Thyroid gland (tissue), 4 donors: ENCODE measurements at regions of chr3 and their contacts with region 1.

Region 1: GRCh38 chr3:40464339-40465110 is 7.4 kb downstream of the RPL14 start:
- DNase-seq: no peak
- H3K4me3 ChIP-seq: no peak overlapping the region
- H3K27ac ChIP-seq: no peak overlapping the region
- H3K4me1 ChIP-seq: no peaks in the 10 kb centered on the region
- H3K27me3 ChIP-seq: no peaks in the 10 kb centered on the region
- CTCF ChIP-seq: no peak
- POLR2A ChIP-seq: no peak

Region 2: GRCh38 chr3:40524568-40525285 is 60.2 kb after region 1 on chr3 and contains the start of gene ZNF621:
- intact Hi-C with region 1: loop called (anchors 10 kb)
- DNase-seq: peak; percentile 90 to 93
- H3K4me3 ChIP-seq: peak within 1 kb of the TSS; percentile 78 to 99 (median 90)
- H3K27ac ChIP-seq: peak within 1 kb of the TSS; percentile 75 to 90 (median 85)
- H3K4me1 ChIP-seq: peaks cover 0 to 19% of the 10 kb centered on the region in 2 donors
- H3K27me3 ChIP-seq: no peaks in the 10 kb centered on the region
- CTCF ChIP-seq: peak in 2 of 6 experiments; percentile 11 to 12
- POLR2A ChIP-seq: peak in 1 of 2 donors; percentile 94
- total RNA-seq, gene ZNF621: 15.8 to 28.1 (median 23.4) TPM

Region 3: DNA sequence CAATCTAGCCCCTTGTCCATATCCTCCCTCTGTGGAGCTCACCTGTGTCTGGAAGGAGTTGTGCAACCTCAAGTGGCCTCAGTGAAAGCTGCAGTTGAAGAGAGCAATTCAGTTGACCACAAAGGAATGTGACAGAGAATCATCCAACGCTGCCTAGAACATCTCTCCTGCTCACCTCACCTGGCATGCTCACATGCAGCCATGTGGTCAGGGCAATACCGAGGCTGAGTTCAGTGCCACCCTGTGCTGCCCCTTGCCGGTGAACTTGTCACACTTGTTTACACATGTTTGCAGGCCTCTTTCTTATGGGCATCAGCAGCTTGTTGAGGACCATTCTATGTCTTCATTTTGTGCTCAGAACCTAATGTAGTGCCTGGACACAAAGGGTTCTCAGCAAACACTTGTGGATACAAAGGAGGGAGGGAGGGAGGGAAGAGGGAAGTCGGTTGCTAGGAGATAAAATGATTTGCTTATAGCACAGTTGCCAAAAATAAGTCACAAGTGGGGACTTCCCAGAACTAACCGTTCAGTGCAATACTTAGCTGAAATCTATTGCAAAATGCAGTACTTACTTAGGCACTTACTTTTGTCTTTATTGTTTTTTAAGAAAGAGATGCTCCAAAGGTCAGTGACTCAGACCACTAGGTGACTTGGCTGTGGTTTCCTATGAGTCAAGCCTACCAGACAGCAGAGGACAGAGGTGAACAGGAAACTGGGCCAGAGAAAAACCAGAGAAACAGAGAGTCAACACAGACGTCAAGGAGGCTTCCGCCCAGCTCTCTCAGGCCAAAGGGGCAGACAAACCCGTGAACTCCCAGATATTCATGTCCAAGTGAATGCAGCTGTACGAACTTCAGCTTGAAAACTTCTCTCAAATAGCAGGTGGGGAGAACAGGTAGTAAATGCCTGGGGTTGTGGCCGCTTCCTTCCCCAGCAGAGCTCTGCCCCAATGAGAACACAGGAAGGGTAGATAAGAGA is 507.0 kb after region 1 on chr3:
- intact Hi-C with region 1: loop called (anchors 10 kb)
- DNase-seq: peak; percentile 76 to 84
- H3K4me3 ChIP-seq: no peak overlapping the region
- H3K27ac ChIP-seq: peak overlapping the region; percentile 72 to 81 (median 75)
- H3K4me1 ChIP-seq: peaks cover 20 to 36% of the 10 kb centered on the region in 2 donors
- H3K27me3 ChIP-seq: no peaks in the 10 kb centered on the region
- CTCF ChIP-seq: peak in 3 of 6 experiments; percentile 6 to 23 (median 11)
- POLR2A ChIP-seq: no peak